ENCODE measurements at regions of chr6 and their contacts with region 1.

Region 1: GRCh38 chr6:109187399-109188114 is 92.2 kb downstream of the CEP57L1 start:
- H3K4me3 Mint-ChIP-seq: no peak overlapping the region
- H3K27ac Mint-ChIP-seq: no peak overlapping the region
- H3K4me1 Mint-ChIP-seq: no peaks in the 10 kb centered on the region
- H3K27me3 Mint-ChIP-seq: peaks cover 5% of the 10 kb centered on the region

Region 2: GRCh38 chr6:109073344-109074132 is 114.0 kb before region 1 on chr6:
- intact Hi-C with region 1: no loop called
- H3K4me3 Mint-ChIP-seq: no peak overlapping the region
- H3K27ac Mint-ChIP-seq: no peak overlapping the region
- H3K4me1 Mint-ChIP-seq: peaks cover 10% of the 10 kb centered on the region
- H3K27me3 Mint-ChIP-seq: no peaks in the 10 kb centered on the region

Region 3: DNA sequence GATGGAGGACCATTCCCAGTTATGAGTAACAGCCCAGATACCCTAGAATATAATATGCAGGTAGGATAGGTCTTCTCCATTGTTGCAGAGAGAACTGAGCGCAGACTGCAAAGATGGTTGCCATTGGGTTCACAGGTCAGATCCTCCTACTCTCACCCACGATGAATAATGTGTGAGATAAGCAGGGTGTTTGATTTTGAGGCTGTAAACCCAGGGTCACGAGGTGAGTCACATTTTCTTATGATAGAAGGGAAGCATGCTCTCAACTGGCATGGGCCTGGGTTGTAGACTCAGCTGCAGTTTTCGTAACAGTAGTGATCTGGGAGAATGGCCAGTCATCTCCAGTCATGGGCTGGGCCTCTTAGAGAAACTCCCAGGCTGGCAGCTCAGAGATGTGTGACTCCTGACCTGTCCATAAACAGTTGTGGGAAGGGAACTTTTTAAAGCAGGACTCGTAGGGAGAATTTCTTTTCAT is 120.5 kb after region 1 on chr6:
- intact Hi-C with region 1: loop called (anchors 10 kb)
- H3K4me3 Mint-ChIP-seq: no peak overlapping the region
- H3K27ac Mint-ChIP-seq: no peak overlapping the region
- H3K4me1 Mint-ChIP-seq: peaks cover 42% of the 10 kb centered on the region
- H3K27me3 Mint-ChIP-seq: no peaks in the 10 kb centered on the region

Region 4: DNA sequence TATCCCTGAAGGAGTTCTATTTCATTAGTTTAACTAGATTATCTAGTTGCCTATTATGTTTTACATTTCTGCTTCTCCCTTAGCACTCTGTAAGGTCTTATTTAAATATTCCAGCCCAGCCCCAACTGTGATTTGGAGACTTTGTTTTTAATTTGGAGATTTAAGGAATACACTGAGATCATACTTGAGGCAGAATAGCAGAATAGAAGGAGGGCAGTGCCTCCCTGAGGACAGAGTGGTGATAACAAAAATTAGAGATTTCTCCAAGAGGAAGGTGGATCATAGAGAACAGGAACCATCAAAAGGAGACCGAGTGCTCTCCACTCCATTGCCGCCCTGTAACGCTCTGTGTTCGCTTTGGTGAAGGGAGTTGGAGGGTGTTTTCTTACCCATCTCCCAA is 209.5 kb after region 1 on chr6:
- intact Hi-C with region 1: loop called (anchors 1 kb)
- H3K4me3 Mint-ChIP-seq: no peak overlapping the region
- H3K27ac Mint-ChIP-seq: no peak overlapping the region
- H3K4me1 Mint-ChIP-seq: peaks cover 26% of the 10 kb centered on the region
- H3K27me3 Mint-ChIP-seq: no peaks in the 10 kb centered on the region

Measured in dendritic cell treated with granulocyte-macrophage colony-stimulating factor and Interleukin-4, amounts not matched to agents 40 ng/mL and 50 ng/mL, for 4 days (primary cell).